Activated T-helper 1 cell treated with anti-CD3 and anti-CD28 coated beads, Interleukin-12 subunit alpha, Interleukin-12 subunit beta, Interleukin-2, Interleukin-4 antibody, amounts not matched to agents 30 ng/mL and 10 ng/mL and 1 ng/mL, durations not matched to agents 14 hours and 24 hours and 36 hours (primary cell): ENCODE measurements at regions of chr17 and their contacts with region 1.

Region 1: GRCh38 chr17:38799378-38800236 is at the start of gene PIP4K2B:
- DNase-seq: peak; percentile 85
- H3K4me3 Mint-ChIP-seq: peak within 1 kb of the TSS; percentile 93
- H3K27ac Mint-ChIP-seq: peak within 1 kb of the TSS; percentile 93
- H3K4me1 Mint-ChIP-seq: peaks cover 33% of the 10 kb centered on the region
- H3K27me3 Mint-ChIP-seq: no peaks in the 10 kb centered on the region
- total RNA-seq, gene PIP4K2B: 40.6 and 40.8 TPM in 2 replicates

Region 2: GRCh38 chr17:38824899-38825761 is 25.5 kb after region 1 on chr17 and contains the start of gene CWC25:
- intact Hi-C with region 1: loop called (anchors 1 kb)
- DNase-seq: peak; percentile 97
- H3K4me3 Mint-ChIP-seq: peak within 1 kb of the TSS; percentile 99
- H3K27ac Mint-ChIP-seq: peak within 1 kb of the TSS; percentile 99
- H3K4me1 Mint-ChIP-seq: peaks cover 33% of the 10 kb centered on the region
- H3K27me3 Mint-ChIP-seq: peaks cover 2% of the 10 kb centered on the region
- total RNA-seq, gene CWC25: 28.6 and 30.4 TPM in 2 replicates

Region 3: GRCh38 chr17:38925263-38925995 is 125.8 kb after region 1 on chr17 and contains the start of gene LASP1NB:
- intact Hi-C with region 1: loop called (anchors 5 kb)
- DNase-seq: no peak
- H3K4me3 Mint-ChIP-seq: peak within 1 kb of the TSS; percentile 24
- H3K27ac Mint-ChIP-seq: peak within 1 kb of the TSS; percentile 21
- H3K4me1 Mint-ChIP-seq: peaks cover 24% of the 10 kb centered on the region
- H3K27me3 Mint-ChIP-seq: no peaks in the 10 kb centered on the region

Region 4: DNA sequence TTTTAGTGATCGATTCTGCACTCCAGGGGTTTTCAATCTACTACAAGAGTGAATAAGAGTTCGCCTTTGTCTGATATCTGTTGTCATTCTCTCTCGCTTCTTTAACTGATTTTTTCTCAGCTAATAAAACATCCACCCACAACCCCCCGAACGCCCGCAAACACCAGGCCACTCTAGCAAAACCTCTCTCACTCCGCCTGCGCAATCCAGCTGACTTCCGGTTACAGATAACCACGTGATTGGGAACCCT is 400.1 kb after region 1 on chr17:
- intact Hi-C with region 1: loop called (anchors 1 kb)
- DNase-seq: peak; percentile 84
- H3K4me3 Mint-ChIP-seq: peak overlapping the region; percentile 93
- H3K27ac Mint-ChIP-seq: peak overlapping the region; percentile 98
- H3K4me1 Mint-ChIP-seq: peaks cover 47% of the 10 kb centered on the region
- H3K27me3 Mint-ChIP-seq: no peaks in the 10 kb centered on the region